H1 (cell line): ENCODE measurements at regions of chr1 and their contacts with region 1.

Region 1: DNA sequence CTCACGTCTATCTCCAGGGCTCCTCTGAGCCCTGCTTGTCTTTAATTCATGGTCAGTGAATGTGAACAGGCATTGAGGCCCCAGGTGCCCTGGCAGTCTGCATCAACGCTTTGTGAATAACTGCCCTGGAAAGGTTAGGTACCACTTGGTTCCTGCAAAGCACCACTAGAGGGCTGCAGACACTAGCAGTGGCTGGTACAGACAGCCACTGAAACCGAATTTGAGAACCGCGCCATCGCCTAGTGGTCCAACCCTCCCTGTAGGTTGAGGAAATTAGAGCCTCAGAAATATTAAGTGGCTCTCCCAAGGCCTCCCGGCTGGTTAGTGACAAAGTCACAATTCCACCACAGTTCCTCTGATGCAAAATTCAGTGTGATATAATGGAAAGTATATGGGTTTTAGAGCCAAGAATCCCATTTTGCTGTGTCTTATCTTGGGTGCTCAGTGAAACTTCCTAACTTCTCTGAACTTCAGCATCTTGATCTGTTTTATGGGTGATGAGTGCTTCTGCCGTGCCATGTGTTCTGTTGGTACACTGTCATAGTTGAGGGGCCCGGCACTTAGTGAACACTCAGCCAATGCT is 46.2 kb upstream of the BCL9 start:
- DNase-seq: peak in 1 of 2 experiments; percentile 72
- H3K4me3 ChIP-seq: no peak overlapping the region
- H3K27ac ChIP-seq: no peak overlapping the region
- H3K4me1 ChIP-seq: no peaks in the 10 kb centered on the region
- H3K27me3 ChIP-seq: no peaks in the 10 kb centered on the region
- CTCF ChIP-seq: peak; percentile 77 to 99 (median 95)
- EP300 ChIP-seq: no peak
- POLR2A ChIP-seq: no peak
- RAD21 ChIP-seq: peak; percentile 99 to 100

Region 2: GRCh38 chr1:147273409-147274336 is 221.4 kb before region 1 on chr1:
- CTCF ChIA-PET with region 1: interaction called, 30 read pairs
- POLR2A ChIA-PET with region 1: no interaction called
- DNase-seq: no peak
- H3K4me3 ChIP-seq: no peak overlapping the region
- H3K27ac ChIP-seq: no peak overlapping the region
- H3K4me1 ChIP-seq: no peaks in the 10 kb centered on the region
- H3K27me3 ChIP-seq: no peaks in the 10 kb centered on the region
- CTCF ChIP-seq: peak in 2 of 3 experiments; percentile 52 to 53; a peak in 2 of 4 replicates
- EP300 ChIP-seq: no peak
- POLR2A ChIP-seq: no peak
- RAD21 ChIP-seq: peak; percentile 80

Region 3: DNA sequence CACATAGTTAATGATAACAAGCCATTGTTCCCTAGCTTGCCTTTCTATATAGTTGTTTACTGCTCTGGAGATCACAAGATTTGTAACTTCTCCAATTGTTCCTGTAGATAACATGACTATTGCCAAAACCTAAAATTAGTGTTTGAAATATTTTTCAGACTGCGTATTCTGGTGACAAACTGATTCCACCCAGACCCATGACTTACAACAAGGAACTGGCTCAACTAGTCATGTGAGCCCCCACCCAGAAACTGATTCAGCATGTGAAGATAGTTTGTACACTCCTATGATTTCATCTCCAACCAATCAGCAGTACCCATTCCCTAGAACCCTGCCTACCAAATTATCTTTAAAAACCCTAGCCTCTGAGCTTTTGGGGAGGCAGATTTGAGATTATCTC is 85.2 kb before region 1 on chr1:
- CTCF ChIA-PET with region 1: no interaction called
- POLR2A ChIA-PET with region 1: no interaction called
- DNase-seq: no peak
- H3K4me3 ChIP-seq: no peak overlapping the region
- H3K27ac ChIP-seq: no peak overlapping the region
- H3K4me1 ChIP-seq: no peaks in the 10 kb centered on the region
- H3K27me3 ChIP-seq: no peaks in the 10 kb centered on the region
- CTCF ChIP-seq: no peak
- EP300 ChIP-seq: no peak
- POLR2A ChIP-seq: no peak
- RAD21 ChIP-seq: no peak

Region 4: GRCh38 chr1:147473735-147474049 is 21.4 kb before region 1 on chr1:
- CTCF ChIA-PET with region 1: no interaction called
- POLR2A ChIA-PET with region 1: no interaction called
- DNase-seq: no peak
- H3K4me3 ChIP-seq: no peak overlapping the region
- H3K27ac ChIP-seq: no peak overlapping the region
- H3K4me1 ChIP-seq: no peaks in the 10 kb centered on the region
- H3K27me3 ChIP-seq: no peaks in the 10 kb centered on the region
- CTCF ChIP-seq: no peak
- EP300 ChIP-seq: no peak
- POLR2A ChIP-seq: no peak
- RAD21 ChIP-seq: no peak

Region 5: DNA sequence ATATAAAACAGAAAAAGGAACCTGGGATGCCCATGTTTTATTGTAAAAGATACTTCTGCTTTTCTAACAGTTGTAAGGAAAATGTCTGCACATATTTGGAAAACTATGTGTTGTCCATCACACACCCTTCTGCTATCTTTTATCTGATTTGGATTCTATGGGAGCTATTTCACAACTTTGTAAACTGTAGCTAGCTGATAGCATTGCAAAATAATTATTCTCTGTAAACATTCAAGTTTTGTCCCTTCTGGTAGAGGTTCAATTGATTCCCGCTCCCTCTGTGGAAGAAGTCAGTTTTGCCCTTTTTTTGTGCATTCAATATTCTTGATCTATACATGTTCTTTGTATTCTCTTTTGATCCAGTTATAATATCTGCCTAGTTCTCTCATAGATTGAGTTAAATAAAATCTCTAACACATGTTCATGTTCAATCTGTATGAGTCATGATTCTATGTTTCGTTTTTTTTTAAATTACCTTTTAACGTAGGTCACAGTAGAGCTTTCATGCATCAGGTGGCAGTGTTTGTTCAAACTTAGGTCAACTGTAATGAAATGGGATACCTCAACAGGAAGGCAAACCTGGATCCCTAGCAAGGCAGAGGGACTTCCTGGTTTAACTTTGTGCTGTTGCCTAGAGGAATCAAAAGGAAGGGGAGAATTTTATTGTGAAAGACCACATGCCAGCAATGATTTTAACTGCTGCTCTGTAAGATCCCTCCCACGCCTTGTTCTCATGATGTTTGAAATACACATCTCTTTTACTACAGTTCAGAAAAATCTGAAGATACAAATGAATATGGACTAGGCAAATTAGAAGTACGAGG is 20.2 kb after region 1 on chr1:
- CTCF ChIA-PET with region 1: interaction called, 23 read pairs
- POLR2A ChIA-PET with region 1: interaction called, 6 read pairs
- DNase-seq: no peak
- H3K4me3 ChIP-seq: no peak overlapping the region
- H3K27ac ChIP-seq: no peak overlapping the region
- H3K4me1 ChIP-seq: peaks cover 0 to 4% (median under 1%) of the 10 kb centered on the region in 4 experiments; a peak in 2 of 7 replicates
- H3K27me3 ChIP-seq: no peaks in the 10 kb centered on the region
- CTCF ChIP-seq: peak in 2 of 3 experiments; percentile 39 to 45; a peak in 3 of 4 replicates
- EP300 ChIP-seq: no peak
- POLR2A ChIP-seq: no peak
- RAD21 ChIP-seq: peak; percentile 75 to 76

Region 6: DNA sequence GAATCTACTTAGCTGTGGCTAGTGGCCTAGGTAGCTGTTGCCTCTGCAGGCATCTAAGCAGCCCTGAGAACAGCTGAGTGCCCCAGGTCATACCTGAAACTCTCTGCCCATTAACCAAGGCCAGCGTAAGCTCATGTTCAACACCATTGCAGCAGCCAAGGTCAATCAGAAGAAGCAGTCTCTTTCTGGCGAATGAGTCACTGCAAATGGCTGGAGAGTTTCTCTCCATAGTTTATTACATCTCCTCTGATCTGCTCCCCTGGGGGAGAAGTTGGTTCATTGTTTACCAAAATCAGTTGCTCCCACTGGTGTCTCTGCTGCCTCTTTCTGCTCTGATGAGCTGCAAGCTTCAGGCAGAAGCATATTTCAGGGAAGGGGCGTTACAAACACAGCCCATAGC is 39.3 kb after region 1 on chr1:
- CTCF ChIA-PET with region 1: interaction called, 12 read pairs
- POLR2A ChIA-PET with region 1: no interaction called
- DNase-seq: no peak
- H3K4me3 ChIP-seq: no peak overlapping the region
- H3K27ac ChIP-seq: no peak overlapping the region
- H3K4me1 ChIP-seq: peaks cover 0 to 8% (median under 1%) of the 10 kb centered on the region in 4 experiments; a peak in 3 of 7 replicates
- H3K27me3 ChIP-seq: no peaks in the 10 kb centered on the region
- CTCF ChIP-seq: no peak
- EP300 ChIP-seq: no peak
- POLR2A ChIP-seq: no peak
- RAD21 ChIP-seq: no peak

Region 7: GRCh38 chr1:147640553-147641165 is 145.6 kb after region 1 on chr1:
- CTCF ChIA-PET with region 1: interaction called, 48 read pairs
- POLR2A ChIA-PET with region 1: no interaction called
- DNase-seq: peak; percentile 77 to 91
- H3K4me3 ChIP-seq: no peak overlapping the region
- H3K27ac ChIP-seq: no peak overlapping the region
- H3K4me1 ChIP-seq: no peaks in the 10 kb centered on the region; a peak in 1 of 7 replicates
- H3K27me3 ChIP-seq: no peaks in the 10 kb centered on the region
- CTCF ChIP-seq: peak; percentile 84 to 93 (median 93)
- EP300 ChIP-seq: 0 out of 3 replicates have a peak, but pooled peaks of 1 of the 2 experiments have one; percentile 40
- POLR2A ChIP-seq: no peak
- RAD21 ChIP-seq: peak; percentile 65 to 71